ENCODE measurements at regions of chr3 and their contacts with region 1.

Region 1: GRCh38 chr3:168467115-168467714 is 371.5 kb upstream of the GOLIM4 start:
- DNase-seq: no peak
- H3K4me3 Mint-ChIP-seq: no peak overlapping the region
- H3K27ac Mint-ChIP-seq: no peak overlapping the region
- H3K4me1 Mint-ChIP-seq: no peaks in the 10 kb centered on the region
- H3K27me3 Mint-ChIP-seq: no peaks in the 10 kb centered on the region

Region 2: DNA sequence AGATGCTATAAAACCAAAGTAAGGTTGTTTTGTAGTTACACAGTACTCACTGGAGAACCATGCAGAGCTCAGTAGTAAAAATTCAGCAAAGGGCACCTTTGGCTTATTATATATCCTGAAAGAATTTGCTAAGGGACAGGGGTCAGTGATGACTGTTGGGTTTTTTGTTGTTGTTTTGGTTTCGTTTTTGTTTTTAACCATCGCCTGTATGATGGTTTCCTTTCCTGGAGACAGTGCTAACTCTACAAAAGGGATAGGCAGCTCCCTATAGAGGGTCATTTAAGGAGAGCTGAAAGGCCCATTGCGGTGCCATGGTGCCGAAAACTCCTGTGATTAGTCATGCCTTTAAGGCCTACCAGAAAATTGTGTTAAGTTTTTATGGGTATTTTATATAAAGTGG is 253.3 kb before region 1 on chr3:
- intact Hi-C with region 1: loop called (anchors 2 kb)
- DNase-seq: no peak
- H3K4me3 Mint-ChIP-seq: peak overlapping the region; percentile 37
- H3K27ac Mint-ChIP-seq: no peak overlapping the region
- H3K4me1 Mint-ChIP-seq: peaks cover 15% of the 10 kb centered on the region
- H3K27me3 Mint-ChIP-seq: peaks cover 5% of the 10 kb centered on the region

Measured in activated T-helper 1 cell treated with anti-CD3 and anti-CD28 coated beads, Interleukin-12 subunit alpha, Interleukin-12 subunit beta, Interleukin-2, Interleukin-4 antibody, amounts not matched to agents 30 ng/mL and 10 ng/mL and 1 ng/mL, durations not matched to agents 14 hours and 24 hours and 36 hours (primary cell).